ENCODE measurements at regions of chr16 and their contacts with region 1.

Region 1: DNA sequence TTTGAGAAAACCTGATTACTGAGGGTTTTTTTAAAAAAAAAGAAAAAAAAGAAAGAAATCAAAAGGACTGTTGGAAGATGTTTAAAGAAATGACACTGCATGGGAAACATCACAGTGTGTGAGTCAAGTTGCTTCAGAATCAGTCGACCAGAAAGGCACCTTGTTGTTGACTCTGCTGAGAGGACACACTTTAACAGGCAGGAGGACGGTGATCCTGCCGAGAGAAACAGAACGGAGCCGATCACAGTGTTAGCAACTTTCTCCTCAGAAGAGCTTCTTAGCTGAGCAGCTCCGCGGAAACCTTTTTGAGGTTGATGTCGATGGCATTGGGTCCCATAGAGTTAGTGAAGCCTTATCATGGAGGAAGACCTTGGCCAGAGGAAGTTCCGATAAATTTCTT is 538.7 kb downstream of the RBFOX1 start:
- DNase-seq: no peak
- H3K4me3 ChIP-seq: no peak overlapping the region
- H3K27ac ChIP-seq: no peak overlapping the region
- H3K4me1 ChIP-seq: no peaks in the 10 kb centered on the region
- H3K27me3 ChIP-seq: no peaks in the 10 kb centered on the region
- CTCF ChIP-seq: no peak
- POLR2A ChIP-seq: no peak

Region 2: DNA sequence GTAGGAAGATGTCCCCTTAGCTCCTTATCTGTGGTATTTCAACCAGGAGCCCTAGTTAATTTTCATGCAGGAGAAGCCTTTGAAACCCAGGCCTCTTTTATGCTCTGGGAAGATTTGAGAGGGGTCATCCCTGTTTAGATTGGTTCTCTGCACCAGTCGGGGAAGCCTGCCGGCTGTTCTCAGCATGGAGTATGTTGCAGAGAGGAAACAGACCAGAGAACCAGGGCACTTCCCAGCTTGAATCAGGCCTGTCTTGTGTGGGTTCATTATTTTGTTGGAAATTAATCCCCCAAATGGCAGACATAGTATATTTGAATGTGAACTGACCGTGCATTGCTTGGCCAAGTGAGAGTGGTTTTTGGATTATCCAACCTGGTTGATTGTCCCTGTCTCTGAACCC is 1620.9 kb before region 1 on chr16:
- intact Hi-C with region 1: loop called (anchors 10 kb)
- DNase-seq: no peak
- H3K4me3 ChIP-seq: no peak overlapping the region
- H3K27ac ChIP-seq: no peak overlapping the region
- H3K4me1 ChIP-seq: no peaks in the 10 kb centered on the region
- H3K27me3 ChIP-seq: no peaks in the 10 kb centered on the region
- CTCF ChIP-seq: no peak
- POLR2A ChIP-seq: no peak

Measured in vagina (tissue), 2 donors.